CD8-positive, alpha-beta memory T cell (primary cell): ENCODE measurements at regions of chr11 and their contacts with region 1.

Region 1: GRCh38 chr11:62880803-62881578 is at the start of gene SLC3A2:
- DNase-seq: peak; percentile 82 to 89 (median 85)
- H3K4me3 ChIP-seq: peak within 1 kb of the TSS; percentile 99
- H3K4me3 Mint-ChIP-seq: peak within 1 kb of the TSS; percentile 99 to 100 (median 100)
- H3K27ac ChIP-seq: peak within 1 kb of the TSS; percentile 99
- H3K27ac Mint-ChIP-seq: peak within 1 kb of the TSS; percentile 96 to 100 (median 99)
- H3K4me1 ChIP-seq: peaks cover 39% of the 10 kb centered on the region
- H3K4me1 Mint-ChIP-seq: peaks cover 51 to 54% (median 54%) of the 10 kb centered on the region in 3 donors
- H3K27me3 ChIP-seq: no peaks in the 10 kb centered on the region
- H3K27me3 Mint-ChIP-seq: no peaks in the 10 kb centered on the region
- total RNA-seq, gene SLC3A2: 426 to 430 TPM

Region 2: GRCh38 chr11:62753736-62754603 is 127.0 kb before region 1 on chr11 and contains the start of gene ZBTB3:
- CTCF ChIA-PET with region 1: interaction called, 5 read pairs
- POLR2A ChIA-PET with region 1: interaction called, 28 read pairs
- DNase-seq: peak; percentile 95 to 99 (median 98)
- H3K4me3 ChIP-seq: peak within 1 kb of the TSS; percentile 99
- H3K4me3 Mint-ChIP-seq: peak within 1 kb of the TSS; percentile 91 to 100 (median 99)
- H3K27ac ChIP-seq: peak within 1 kb of the TSS; percentile 91
- H3K27ac Mint-ChIP-seq: peak within 1 kb of the TSS; percentile 83 to 99 (median 98)
- H3K4me1 ChIP-seq: peaks cover 22% of the 10 kb centered on the region
- H3K4me1 Mint-ChIP-seq: peaks cover 24 to 40% (median 33%) of the 10 kb centered on the region in 3 donors
- H3K27me3 ChIP-seq: no peaks in the 10 kb centered on the region
- H3K27me3 Mint-ChIP-seq: no peaks in the 10 kb centered on the region
- total RNA-seq, gene ZBTB3: 9.4 to 11.6 TPM

Region 3: DNA sequence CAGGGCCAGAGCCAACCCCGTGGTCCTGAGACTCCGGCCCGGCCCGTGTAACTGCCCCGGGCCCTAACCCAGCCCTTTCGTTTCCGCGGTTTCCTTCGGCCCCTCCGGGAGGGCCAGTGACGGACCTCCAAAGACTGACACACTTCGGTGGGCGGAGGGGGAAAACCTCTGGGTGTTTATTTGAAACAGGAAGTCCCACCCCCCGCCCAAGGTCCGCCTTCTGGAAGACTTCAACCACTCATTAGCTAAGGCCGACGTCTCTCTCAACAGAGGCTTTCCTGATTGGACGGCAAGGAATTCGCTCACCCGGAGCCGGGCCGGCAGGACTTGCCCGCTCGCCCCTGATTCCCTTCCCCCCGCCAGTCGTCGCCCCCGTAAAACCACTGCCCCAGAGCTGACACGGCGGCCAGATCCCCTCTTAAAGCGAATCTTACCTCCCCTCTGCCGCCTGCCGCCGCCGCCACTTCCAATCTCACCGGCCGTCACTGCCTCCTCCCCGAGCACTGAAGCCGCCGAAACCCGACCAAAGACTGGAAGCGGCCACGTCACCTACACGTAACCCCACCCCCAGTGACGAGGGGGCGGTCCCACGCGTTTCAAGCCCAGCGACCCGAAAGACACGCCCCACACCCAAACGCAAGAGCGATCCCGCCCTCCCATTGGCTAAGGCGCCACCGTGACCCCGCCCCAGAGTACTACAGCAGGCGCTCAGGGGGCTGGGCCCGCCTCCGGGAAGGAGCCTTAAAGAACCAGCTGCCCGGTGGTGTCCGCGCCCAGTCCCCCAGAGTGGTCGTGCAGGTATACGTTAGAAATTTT is 49.3 kb before region 1 on chr11 and contains the start of gene STX5:
- CTCF ChIA-PET with region 1: interaction called, 5 read pairs
- POLR2A ChIA-PET with region 1: interaction called, 19 read pairs
- DNase-seq: peak; percentile 99 to 100 (median 99)
- H3K4me3 ChIP-seq: peak within 1 kb of the TSS; percentile 96
- H3K4me3 Mint-ChIP-seq: peak within 1 kb of the TSS; percentile 93 to 100 (median 97)
- H3K27ac ChIP-seq: peak within 1 kb of the TSS; percentile 98
- H3K27ac Mint-ChIP-seq: peak within 1 kb of the TSS; percentile 96 to 100 (median 98)
- H3K4me1 ChIP-seq: peaks cover 29% of the 10 kb centered on the region
- H3K4me1 Mint-ChIP-seq: peaks cover 22 to 55% (median 35%) of the 10 kb centered on the region in 3 donors
- H3K27me3 ChIP-seq: no peaks in the 10 kb centered on the region
- H3K27me3 Mint-ChIP-seq: no peaks in the 10 kb centered on the region
- total RNA-seq, gene STX5: 34.7 to 35.3 TPM

Region 4: GRCh38 chr11:62841361-62842184 is 39.4 kb before region 1 on chr11:
- CTCF ChIA-PET with region 1: interaction called, 12 read pairs
- POLR2A ChIA-PET with region 1: interaction called, 42 read pairs
- DNase-seq: peak; percentile 69 to 90 (median 88)
- H3K4me3 ChIP-seq: peak overlapping the region; percentile 67
- H3K4me3 Mint-ChIP-seq: no peak overlapping the region
- H3K27ac ChIP-seq: peak overlapping the region; percentile 98
- H3K27ac Mint-ChIP-seq: no peak overlapping the region
- H3K4me1 ChIP-seq: peaks cover 23% of the 10 kb centered on the region
- H3K4me1 Mint-ChIP-seq: peaks cover 22 to 28% (median 27%) of the 10 kb centered on the region in 3 donors
- H3K27me3 ChIP-seq: no peaks in the 10 kb centered on the region
- H3K27me3 Mint-ChIP-seq: peaks cover 0 to 1% of the 10 kb centered on the region in 2 donors

Region 5: GRCh38 chr11:62855571-62856332 is 25.2 kb before region 1 on chr11:
- CTCF ChIA-PET with region 1: interaction called, 32 read pairs
- POLR2A ChIA-PET with region 1: interaction called, 54 read pairs
- DNase-seq: peak; percentile 94 to 99 (median 98)
- H3K4me3 ChIP-seq: peak overlapping the region; percentile 98
- H3K4me3 Mint-ChIP-seq: peak overlapping the region; percentile 94 to 99 (median 98)
- H3K27ac ChIP-seq: peak overlapping the region; percentile 94
- H3K27ac Mint-ChIP-seq: peak overlapping the region; percentile 84 to 96 (median 94)
- H3K4me1 ChIP-seq: peaks cover 47% of the 10 kb centered on the region
- H3K4me1 Mint-ChIP-seq: peaks cover 46 to 63% (median 55%) of the 10 kb centered on the region in 3 donors
- H3K27me3 ChIP-seq: no peaks in the 10 kb centered on the region
- H3K27me3 Mint-ChIP-seq: peaks cover 0 to 6% of the 10 kb centered on the region in 2 donors

Region 6: GRCh38 chr11:62860835-62861563 is 20.0 kb before region 1 on chr11:
- CTCF ChIA-PET with region 1: interaction called, 32 read pairs
- POLR2A ChIA-PET with region 1: interaction called, 54 read pairs
- DNase-seq: peak in 1 of 5 donors; percentile 3
- H3K4me3 ChIP-seq: no peak overlapping the region
- H3K4me3 Mint-ChIP-seq: no peak overlapping the region
- H3K27ac ChIP-seq: peak overlapping the region; percentile 38
- H3K27ac Mint-ChIP-seq: peak overlapping the region in 2 of 8 donors; percentile 17 to 91
- H3K4me1 ChIP-seq: peaks cover 8% of the 10 kb centered on the region
- H3K4me1 Mint-ChIP-seq: peaks cover 9 to 17% (median 17%) of the 10 kb centered on the region in 3 donors
- H3K27me3 ChIP-seq: no peaks in the 10 kb centered on the region
- H3K27me3 Mint-ChIP-seq: peaks cover 0 to under 1% of the 10 kb centered on the region in 2 donors

Region 7: GRCh38 chr11:62905927-62906531 is 25.0 kb after region 1 on chr11:
- CTCF ChIA-PET with region 1: interaction called, 21 read pairs
- POLR2A ChIA-PET with region 1: no interaction called
- DNase-seq: peak; percentile 55 to 82 (median 68)
- H3K4me3 ChIP-seq: no peak overlapping the region
- H3K4me3 Mint-ChIP-seq: no peak overlapping the region
- H3K27ac ChIP-seq: no peak overlapping the region
- H3K27ac Mint-ChIP-seq: peak overlapping the region in 1 of 8 donors; percentile 14
- H3K4me1 ChIP-seq: no peaks in the 10 kb centered on the region
- H3K4me1 Mint-ChIP-seq: peaks cover 0 to 5% (median 4%) of the 10 kb centered on the region in 3 donors
- H3K27me3 ChIP-seq: no peaks in the 10 kb centered on the region
- H3K27me3 Mint-ChIP-seq: peaks cover 0 to 35% of the 10 kb centered on the region in 2 donors

Region 8: DNA sequence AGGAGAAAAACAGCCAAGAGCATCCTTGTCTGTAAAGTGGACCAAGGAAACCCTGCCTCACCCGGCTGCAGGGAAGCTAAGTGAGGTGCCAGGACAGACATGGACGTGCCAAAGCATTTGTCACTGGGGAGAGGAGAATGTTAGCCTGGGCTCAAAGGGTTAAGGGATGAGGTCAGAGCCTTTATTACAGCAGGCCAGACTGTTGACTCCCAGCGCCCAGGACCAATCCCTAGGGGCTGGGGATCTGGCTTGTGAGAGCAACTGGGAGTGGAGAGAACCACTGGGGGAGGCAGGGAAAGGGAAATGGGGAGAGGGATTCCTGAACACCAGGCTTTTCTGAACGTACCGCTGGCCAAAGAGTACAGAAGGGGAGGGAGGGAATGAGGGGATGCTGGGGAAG is 37.5 kb after region 1 on chr11:
- CTCF ChIA-PET with region 1: no interaction called
- POLR2A ChIA-PET with region 1: no interaction called
- DNase-seq: no peak
- H3K4me3 ChIP-seq: no peak overlapping the region
- H3K4me3 Mint-ChIP-seq: no peak overlapping the region
- H3K27ac ChIP-seq: no peak overlapping the region
- H3K27ac Mint-ChIP-seq: no peak overlapping the region
- H3K4me1 ChIP-seq: peaks cover 2% of the 10 kb centered on the region
- H3K4me1 Mint-ChIP-seq: peaks cover 5 to 10% (median 10%) of the 10 kb centered on the region in 3 donors
- H3K27me3 ChIP-seq: peaks cover 5% of the 10 kb centered on the region
- H3K27me3 Mint-ChIP-seq: peaks cover 19 to 41% of the 10 kb centered on the region in 2 donors